Endothelial cell of umbilical vein (primary cell): ENCODE measurements at regions of chr16 and their contacts with region 1.

Region 1: GRCh38 chr16:12406926-12407690 is 396.6 kb downstream of the CPPED1 start:
- DNase-seq: peak; percentile 75
- H3K4me3 ChIP-seq: no peak overlapping the region
- H3K27ac ChIP-seq: peak overlapping the region; percentile 99
- H3K4me1 ChIP-seq: peaks cover 42% of the 10 kb centered on the region
- H3K27me3 ChIP-seq: no peaks in the 10 kb centered on the region
- CTCF ChIP-seq: no peak
- POLR2A ChIP-seq: peak; percentile 34

Region 2: GRCh38 chr16:11851294-11852091 is 555.6 kb before region 1 on chr16 and contains the start of gene RSL1D1:
- CTCF ChIA-PET with region 1: no interaction called
- POLR2A ChIA-PET with region 1: no interaction called
- dilution Hi-C with region 1: no loop called
- intact Hi-C with region 1: loop called (anchors 5 kb)
- DNase-seq: peak; percentile 98
- H3K4me3 ChIP-seq: peak within 1 kb of the TSS; percentile 51 to 95 (median 72)
- H3K27ac ChIP-seq: peak within 1 kb of the TSS; percentile 47
- H3K4me1 ChIP-seq: peaks cover 11% of the 10 kb centered on the region
- H3K27me3 ChIP-seq: no peaks in the 10 kb centered on the region
- CTCF ChIP-seq: no peak
- POLR2A ChIP-seq: peak; percentile 98
- total RNA-seq, gene RSL1D1: 127 and 132 TPM in 2 replicates

Region 3: DNA sequence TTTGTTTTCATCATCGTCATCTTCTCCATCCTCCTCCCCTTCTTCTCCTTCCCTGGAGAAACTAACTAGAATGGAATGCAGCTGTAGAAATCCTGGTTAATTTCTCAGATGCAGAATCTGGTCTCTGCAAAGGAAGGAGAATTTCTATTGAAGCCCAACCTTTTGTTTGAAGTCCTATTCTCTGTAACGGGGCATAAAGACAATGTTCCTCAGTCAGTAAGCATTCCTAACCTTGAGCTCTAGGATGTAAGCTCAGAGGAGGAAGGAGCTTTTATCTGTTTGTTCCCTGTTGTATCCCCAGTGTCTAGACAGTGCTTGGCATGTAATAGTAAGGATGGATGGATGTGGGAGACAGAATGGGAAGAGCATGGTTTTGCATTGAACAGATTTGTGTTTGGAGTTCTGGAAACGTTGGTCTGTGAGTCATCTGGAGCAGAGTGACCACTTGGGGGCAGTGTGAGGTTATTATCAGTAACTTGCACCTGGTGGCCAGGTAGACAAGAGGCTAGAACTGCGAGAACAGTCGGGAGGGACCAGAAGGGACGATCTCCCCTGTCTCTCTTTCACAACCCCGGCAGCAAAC is 66.9 kb before region 1 on chr16:
- CTCF ChIA-PET with region 1: interaction called, 6 read pairs
- POLR2A ChIA-PET with region 1: interaction called, 4 read pairs
- dilution Hi-C with region 1: no loop called
- intact Hi-C with region 1: loop called (anchors 1 kb)
- DNase-seq: peak; percentile 47
- H3K4me3 ChIP-seq: no peak overlapping the region
- H3K27ac ChIP-seq: no peak overlapping the region
- H3K4me1 ChIP-seq: peaks cover 17% of the 10 kb centered on the region
- H3K27me3 ChIP-seq: no peaks in the 10 kb centered on the region
- CTCF ChIP-seq: peak; percentile 45 to 46
- POLR2A ChIP-seq: no peak

Region 4: DNA sequence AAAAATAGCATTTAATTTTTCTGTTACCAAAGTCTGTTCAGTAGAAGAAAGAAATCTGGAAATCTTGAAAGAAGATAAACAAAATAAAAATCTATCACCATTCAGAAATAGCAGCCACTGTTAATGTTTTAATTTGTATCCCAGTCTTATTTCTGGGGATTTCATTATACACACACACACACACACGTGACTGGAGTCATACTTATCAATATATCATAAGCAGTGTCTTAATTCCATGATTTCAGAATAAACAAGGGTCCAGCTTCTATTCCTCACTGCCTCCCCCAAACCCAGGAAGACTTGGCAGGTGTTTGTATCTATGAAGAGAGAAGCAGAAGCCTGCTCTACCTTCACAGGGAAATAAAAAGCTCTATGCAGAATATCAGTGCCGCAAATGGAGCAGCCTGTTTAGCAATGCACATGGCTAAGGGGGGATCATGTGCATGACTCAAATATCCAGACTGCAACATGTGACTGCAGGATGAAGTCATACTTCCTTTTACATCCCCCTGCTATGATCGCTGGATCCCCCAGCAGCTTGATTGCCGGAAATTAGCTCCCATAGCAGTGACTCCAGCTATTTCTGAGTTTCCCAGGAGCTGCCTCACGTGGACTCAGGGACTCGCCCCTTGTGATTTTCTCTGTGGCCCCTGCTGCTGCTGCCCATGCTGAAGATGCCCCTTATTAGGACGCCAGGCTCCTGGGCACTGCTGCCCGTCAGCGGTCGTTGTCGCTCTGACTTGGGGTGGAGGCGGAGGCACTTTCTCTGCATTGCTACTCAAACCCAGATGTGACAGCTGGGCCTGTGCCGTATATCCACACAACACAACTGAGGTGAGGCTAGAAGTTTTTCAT is 55.5 kb after region 1 on chr16:
- CTCF ChIA-PET with region 1: no interaction called
- POLR2A ChIA-PET with region 1: interaction called, 4 read pairs
- dilution Hi-C with region 1: no loop called
- intact Hi-C with region 1: loop called (anchors 2 kb)
- DNase-seq: peak; percentile 70
- H3K4me3 ChIP-seq: no peak overlapping the region
- H3K27ac ChIP-seq: peak overlapping the region; percentile 82
- H3K4me1 ChIP-seq: peaks cover 12% of the 10 kb centered on the region
- H3K27me3 ChIP-seq: no peaks in the 10 kb centered on the region
- CTCF ChIP-seq: no peak
- POLR2A ChIP-seq: no peak

Region 5: GRCh38 chr16:12803203-12804097 is 396.3 kb after region 1 on chr16 and contains the start of gene CPPED1:
- CTCF ChIA-PET with region 1: no interaction called
- POLR2A ChIA-PET with region 1: interaction called, 3 read pairs
- dilution Hi-C with region 1: no loop called
- intact Hi-C with region 1: loop called (anchors 1 kb)
- DNase-seq: peak; percentile 91
- H3K4me3 ChIP-seq: peak within 1 kb of the TSS; percentile 35 to 89 (median 76)
- H3K27ac ChIP-seq: peak within 1 kb of the TSS; percentile 99
- H3K4me1 ChIP-seq: peaks cover 26% of the 10 kb centered on the region
- H3K27me3 ChIP-seq: no peaks in the 10 kb centered on the region
- CTCF ChIP-seq: no peak
- POLR2A ChIP-seq: peak; percentile 55
- total RNA-seq, gene CPPED1: 55.8 and 59.3 TPM in 2 replicates